ENCODE measurements at regions of chr18 and their contacts with region 1.

Region 1: DNA sequence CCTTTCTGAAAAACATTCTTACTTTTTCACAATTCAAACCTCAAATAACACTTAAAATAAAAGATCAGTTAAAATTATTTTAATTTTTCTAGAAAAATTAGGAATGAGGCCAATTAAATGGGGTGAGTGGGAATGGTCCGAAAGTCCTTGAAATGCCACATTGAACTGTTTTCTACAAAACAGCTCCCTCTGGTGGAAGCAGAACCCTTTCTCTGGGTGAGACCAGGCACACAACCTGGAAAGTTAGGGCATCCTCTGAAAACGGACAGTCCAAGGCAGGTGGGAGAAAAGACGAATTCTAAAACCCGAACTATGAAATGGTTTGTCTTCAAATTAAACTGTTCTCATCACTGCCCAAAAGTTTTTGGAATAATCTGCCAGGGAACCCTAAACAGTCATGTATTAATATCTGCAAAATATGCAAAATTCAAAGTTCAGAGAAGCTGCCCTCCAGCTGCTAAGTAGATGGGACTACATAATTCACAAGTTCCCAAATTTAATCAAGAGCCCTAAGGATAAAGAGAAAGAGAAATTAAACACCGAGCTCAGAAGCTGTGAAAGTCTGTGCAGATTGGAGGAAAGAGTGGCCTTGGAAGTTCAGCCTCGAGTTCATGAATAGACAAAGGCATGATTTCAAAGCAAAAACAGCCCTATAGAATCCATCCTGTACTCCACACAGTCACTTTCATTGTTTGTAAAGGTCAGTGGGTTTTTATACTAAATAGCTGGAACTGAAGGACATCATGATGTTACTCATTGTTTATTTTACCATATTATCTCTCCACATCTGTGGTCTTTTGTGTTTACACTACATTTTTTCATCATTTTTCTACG is 108.3 kb downstream of the PIEZO2 start:
- DNase-seq: peak; percentile 1
- H3K4me3 ChIP-seq: no peak overlapping the region
- H3K27ac ChIP-seq: no peak overlapping the region
- H3K4me1 ChIP-seq: no peaks in the 10 kb centered on the region
- H3K27me3 ChIP-seq: no peaks in the 10 kb centered on the region
- CTCF ChIP-seq: peak; percentile 18 to 53

Region 2: DNA sequence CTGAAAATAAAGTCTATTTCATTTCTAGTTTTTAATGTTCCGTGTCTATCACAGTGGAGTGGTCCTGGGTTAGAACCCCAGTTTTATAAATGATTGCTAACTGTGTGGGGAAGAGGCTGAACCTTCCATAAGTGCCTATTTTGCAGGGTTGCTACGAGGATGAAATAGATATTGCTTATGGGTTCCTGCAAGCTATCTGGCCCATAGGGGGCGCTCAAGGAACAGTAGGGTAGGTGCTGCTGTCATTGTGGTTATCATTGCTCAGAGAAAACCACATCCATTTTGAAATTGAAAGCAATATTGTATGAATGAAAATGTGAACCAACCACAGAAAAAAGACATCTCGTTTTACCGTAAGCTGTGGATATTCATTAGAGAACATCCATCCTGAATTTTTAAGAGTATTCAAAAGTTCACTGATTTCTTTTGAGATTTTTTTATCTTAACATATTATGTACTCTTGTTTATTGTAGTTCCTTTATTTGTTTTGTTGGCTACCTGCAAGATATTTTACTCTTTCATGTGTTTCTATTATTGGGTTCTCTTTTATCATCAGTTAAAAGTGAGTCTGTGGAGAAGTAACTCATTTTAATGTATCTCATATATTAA is 253.6 kb before region 1 on chr18:
- CTCF ChIA-PET with region 1: no interaction called
- dilution Hi-C with region 1: no loop called
- in situ Hi-C with region 1: no loop called
- intact Hi-C with region 1: loop called (anchors 5 kb)
- DNase-seq: peak; percentile 58
- H3K4me3 ChIP-seq: no peak overlapping the region
- H3K27ac ChIP-seq: no peak overlapping the region
- H3K4me1 ChIP-seq: no peaks in the 10 kb centered on the region
- H3K27me3 ChIP-seq: no peaks in the 10 kb centered on the region
- CTCF ChIP-seq: peak; percentile 55 to 60

Region 3: GRCh38 chr18:11149441-11150270 is 108.6 kb after region 1 on chr18 and contains the start of gene PIEZO2:
- CTCF ChIA-PET with region 1: no interaction called
- dilution Hi-C with region 1: no loop called
- in situ Hi-C with region 1: no loop called
- intact Hi-C with region 1: loop called (anchors 1 kb)
- DNase-seq: no peak
- H3K4me3 ChIP-seq: no peak within 1 kb of the TSS
- H3K27ac ChIP-seq: no peak within 1 kb of the TSS
- H3K4me1 ChIP-seq: no peaks in the 10 kb centered on the region
- H3K27me3 ChIP-seq: peaks cover 4% of the 10 kb centered on the region
- CTCF ChIP-seq: no peak
- total RNA-seq, gene PIEZO2: 1.3 TPM in 1 of 2 donors, not detected in the other

Measured in mammary epithelial cell (primary cell).